Activated T-helper 2 cell treated with anti-CD3 and anti-CD28 coated beads, Interferon-gamma antibody, Interleukin-2, Interleukin-4, amounts not matched to agents 10 μg/mL and 5 μg/mL and 100 μg/mL, durations not matched to agents 14 hours and 24 hours and 36 hours (primary cell): ENCODE measurements at regions of chr10 and their contacts with region 1.

Region 1: GRCh38 chr10:52644373-52645186 is 128.0 kb downstream of the MBL2 start:
- DNase-seq: no peak
- H3K4me3 Mint-ChIP-seq: no peak overlapping the region
- H3K27ac Mint-ChIP-seq: no peak overlapping the region
- H3K4me1 Mint-ChIP-seq: peaks cover 2% of the 10 kb centered on the region
- H3K27me3 Mint-ChIP-seq: no peaks in the 10 kb centered on the region

Region 2: DNA sequence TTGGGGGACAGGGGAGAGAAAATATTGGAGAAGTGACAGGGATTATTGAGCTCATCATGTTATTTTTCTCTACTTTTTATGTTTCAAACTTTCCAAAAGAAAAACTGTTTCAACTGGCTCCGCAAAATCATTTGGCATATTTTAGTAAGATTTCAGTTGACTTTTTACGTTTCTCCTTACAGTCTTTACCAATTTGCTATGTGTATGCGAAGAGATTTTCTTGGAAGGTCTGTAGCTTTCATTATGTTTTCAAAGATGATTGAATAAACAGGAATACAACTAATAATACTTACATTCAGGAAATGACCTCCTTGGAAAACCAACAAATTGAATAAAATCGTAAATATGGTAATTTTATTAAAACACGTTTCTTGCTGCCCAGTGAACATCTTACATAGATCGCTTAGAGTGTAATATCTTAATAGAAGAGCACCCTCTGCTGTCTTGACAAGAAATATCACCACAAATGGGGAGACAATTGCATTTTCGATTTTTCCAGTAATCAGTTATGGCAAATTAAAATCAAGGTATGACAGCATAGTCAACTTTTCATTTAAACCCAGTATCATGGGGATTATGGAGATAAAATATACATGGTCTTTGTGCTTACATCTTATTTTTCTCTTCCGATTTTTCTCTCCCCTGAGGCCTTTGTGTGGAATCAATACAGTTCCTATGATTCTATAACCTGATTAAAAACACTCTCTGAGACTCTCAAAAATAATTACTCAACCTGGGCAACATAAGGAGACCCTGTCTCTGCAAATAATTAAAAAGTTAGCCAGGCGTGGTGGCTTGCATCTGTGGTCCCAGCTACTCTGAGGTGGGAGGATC is 84.9 kb after region 1 on chr10:
- intact Hi-C with region 1: loop called (anchors 1 kb)
- DNase-seq: no peak
- H3K4me3 Mint-ChIP-seq: no peak overlapping the region
- H3K27ac Mint-ChIP-seq: no peak overlapping the region
- H3K4me1 Mint-ChIP-seq: no peaks in the 10 kb centered on the region
- H3K27me3 Mint-ChIP-seq: no peaks in the 10 kb centered on the region

Region 3: DNA sequence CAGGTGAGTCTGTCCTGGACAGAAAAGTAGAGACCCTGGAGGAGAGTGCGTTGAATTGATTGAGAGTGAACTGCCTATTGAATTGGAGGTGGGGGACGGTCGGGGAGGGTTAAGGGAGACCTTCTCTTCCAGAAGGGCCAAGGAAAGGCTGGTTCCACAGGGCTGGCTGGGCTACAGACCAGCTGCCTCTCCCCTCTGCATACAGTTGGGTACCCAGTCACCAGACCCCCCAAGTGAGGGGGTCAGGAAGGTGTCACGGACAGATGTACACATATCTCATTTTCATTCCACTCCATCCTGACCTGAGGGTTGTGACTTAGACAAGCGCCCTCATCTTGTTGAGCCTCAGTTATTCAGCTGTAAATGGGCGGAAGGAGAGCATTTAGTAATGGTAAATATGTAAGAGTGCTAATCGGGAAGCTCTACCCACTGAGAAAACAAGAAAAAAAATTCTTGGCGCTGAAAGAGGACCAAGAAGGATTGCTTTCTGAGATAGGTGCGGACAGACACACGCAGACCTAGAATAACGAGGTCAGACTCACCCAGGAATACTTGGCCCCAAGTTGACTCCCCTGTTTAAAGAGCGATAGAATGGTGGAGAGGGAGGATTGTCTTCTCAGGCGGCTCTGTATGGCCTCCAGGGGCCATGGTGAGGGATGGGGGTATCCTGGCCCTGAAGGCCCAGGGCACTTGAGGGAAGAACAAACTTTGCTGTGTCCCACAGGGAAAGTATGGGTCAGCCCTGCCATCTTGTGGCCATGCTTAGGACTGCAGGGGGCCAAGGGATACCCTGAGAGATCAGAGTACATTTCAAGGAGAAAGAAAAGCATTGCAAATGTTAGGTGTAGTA is 135.2 kb after region 1 on chr10:
- intact Hi-C with region 1: loop called (anchors 1 kb)
- DNase-seq: peak; percentile 31
- H3K4me3 Mint-ChIP-seq: no peak overlapping the region
- H3K27ac Mint-ChIP-seq: no peak overlapping the region
- H3K4me1 Mint-ChIP-seq: no peaks in the 10 kb centered on the region
- H3K27me3 Mint-ChIP-seq: no peaks in the 10 kb centered on the region

Region 4: GRCh38 chr10:53102424-53102823 is 457.8 kb after region 1 on chr10:
- intact Hi-C with region 1: no loop called
- DNase-seq: no peak
- H3K4me3 Mint-ChIP-seq: no peak overlapping the region
- H3K27ac Mint-ChIP-seq: no peak overlapping the region
- H3K4me1 Mint-ChIP-seq: no peaks in the 10 kb centered on the region
- H3K27me3 Mint-ChIP-seq: no peaks in the 10 kb centered on the region